Activated CD4-positive, alpha-beta T cell treated with anti-CD3 and anti-CD28 coated beads for 36 hours (primary cell): ENCODE measurements at regions of chr12 and their contacts with region 1.

Region 1: GRCh38 chr12:105382771-105383622 is 52.5 kb downstream of the C12orf75 start:
- DNase-seq: peak; percentile 12
- ATAC-seq: peak; percentile 51
- H3K4me3 Mint-ChIP-seq: no peak overlapping the region
- H3K27ac Mint-ChIP-seq: no peak overlapping the region
- H3K4me1 Mint-ChIP-seq: no peaks in the 10 kb centered on the region
- H3K27me3 Mint-ChIP-seq: no peaks in the 10 kb centered on the region

Region 2: DNA sequence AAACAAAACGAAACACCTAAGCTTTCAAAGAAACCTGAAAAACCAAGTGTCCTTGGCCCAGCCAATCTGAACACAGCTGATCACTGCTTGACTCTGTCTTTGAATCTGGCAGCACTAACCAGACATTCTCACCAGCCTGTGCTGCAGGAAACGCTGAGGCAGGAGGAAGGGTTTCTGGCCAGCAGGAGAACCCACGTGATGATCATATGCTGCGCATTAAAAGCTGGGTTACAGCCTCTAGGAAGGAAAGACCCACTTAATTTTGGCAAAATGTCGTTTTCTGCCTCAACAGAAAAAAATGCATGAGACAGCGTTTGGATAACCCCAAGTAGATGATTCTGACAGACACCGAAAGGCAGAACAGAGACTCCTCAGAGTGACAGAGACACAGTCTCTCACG is 156.8 kb before region 1 on chr12:
- CTCF ChIA-PET with region 1: interaction called, 3 read pairs
- POLR2A ChIA-PET with region 1: no interaction called
- intact Hi-C with region 1: loop called in 1 of 2 experiments (anchors 5 kb)
- DNase-seq: peak; percentile 49
- ATAC-seq: peak; percentile 69
- H3K4me3 Mint-ChIP-seq: no peak overlapping the region
- H3K27ac Mint-ChIP-seq: no peak overlapping the region
- H3K4me1 Mint-ChIP-seq: peaks cover 61% of the 10 kb centered on the region
- H3K27me3 Mint-ChIP-seq: no peaks in the 10 kb centered on the region

Region 3: DNA sequence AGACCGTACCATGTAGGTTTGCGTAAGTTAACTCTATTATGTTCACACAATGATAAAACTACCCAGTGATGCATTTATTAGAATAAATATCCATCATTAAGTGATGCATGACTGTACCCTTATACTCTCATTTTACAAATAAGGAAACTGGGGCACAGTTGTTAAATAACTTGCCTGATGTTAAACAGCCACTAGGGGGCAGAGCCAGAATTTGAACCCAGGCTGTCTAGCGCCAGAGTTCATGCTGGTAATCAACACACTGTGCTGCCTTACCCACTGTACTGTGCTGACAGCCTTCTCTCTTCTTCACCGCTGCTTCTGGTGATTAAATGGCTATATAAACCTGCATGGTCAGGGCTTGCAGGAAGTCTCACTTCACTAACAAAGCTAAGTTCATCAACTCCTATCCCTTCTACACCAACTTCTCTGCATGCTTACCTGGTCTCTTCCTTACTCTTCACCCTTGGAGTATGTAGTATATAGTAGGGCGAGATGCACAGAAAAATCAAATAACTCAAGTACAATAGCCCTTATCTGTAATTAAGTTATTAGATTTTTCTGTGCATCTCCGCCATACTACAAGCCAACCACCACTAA is 103.4 kb before region 1 on chr12:
- CTCF ChIA-PET with region 1: interaction called, 5 read pairs
- POLR2A ChIA-PET with region 1: no interaction called
- intact Hi-C with region 1: loop called (anchors 1 kb)
- DNase-seq: peak; percentile 59
- ATAC-seq: peak; percentile 60
- H3K4me3 Mint-ChIP-seq: no peak overlapping the region
- H3K27ac Mint-ChIP-seq: no peak overlapping the region
- H3K4me1 Mint-ChIP-seq: peaks cover 3% of the 10 kb centered on the region
- H3K27me3 Mint-ChIP-seq: peaks cover 5% of the 10 kb centered on the region

Region 4: DNA sequence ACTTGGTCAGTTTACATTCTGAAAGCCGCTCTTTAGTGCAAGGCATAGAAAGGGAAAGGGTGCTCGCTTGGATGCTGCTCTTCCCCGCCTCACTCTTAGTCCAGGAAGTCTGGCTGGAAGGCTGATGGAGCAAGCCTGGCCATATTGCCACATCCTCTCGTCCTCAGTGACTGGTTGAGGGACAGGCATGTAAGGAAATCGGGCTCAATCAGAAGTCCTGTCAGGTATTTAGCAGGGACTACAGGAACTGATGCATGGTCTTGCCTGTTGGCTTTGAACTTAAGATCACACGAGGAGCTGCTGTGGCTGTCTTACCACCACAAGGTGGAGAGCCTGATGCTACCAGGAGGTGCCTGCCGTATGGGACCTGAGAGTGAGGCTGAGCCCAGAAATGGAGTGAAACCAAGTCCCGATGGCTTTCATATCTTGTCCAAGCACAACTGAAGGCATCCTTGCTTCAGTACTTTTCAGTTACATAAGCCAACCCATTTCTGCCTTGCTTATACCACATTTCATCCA is 63.2 kb before region 1 on chr12:
- CTCF ChIA-PET with region 1: interaction called, 8 read pairs
- POLR2A ChIA-PET with region 1: no interaction called
- intact Hi-C with region 1: loop called in 1 of 2 experiments (anchors 2 kb)
- DNase-seq: no peak
- ATAC-seq: peak; percentile 49
- H3K4me3 Mint-ChIP-seq: no peak overlapping the region
- H3K27ac Mint-ChIP-seq: no peak overlapping the region
- H3K4me1 Mint-ChIP-seq: peaks cover 11% of the 10 kb centered on the region
- H3K27me3 Mint-ChIP-seq: no peaks in the 10 kb centered on the region

Region 5: GRCh38 chr12:105445249-105446015 is 62.4 kb after region 1 on chr12:
- CTCF ChIA-PET with region 1: no interaction called
- POLR2A ChIA-PET with region 1: no interaction called
- intact Hi-C with region 1: no loop called
- DNase-seq: no peak
- ATAC-seq: no peak
- H3K4me3 Mint-ChIP-seq: no peak overlapping the region
- H3K27ac Mint-ChIP-seq: no peak overlapping the region
- H3K4me1 Mint-ChIP-seq: no peaks in the 10 kb centered on the region
- H3K27me3 Mint-ChIP-seq: peaks cover 18% of the 10 kb centered on the region